WTC11 (cell line): ENCODE measurements at regions of chr17 and their contacts with region 1.

Region 1: GRCh38 chr17:8393420-8394241 is 4.0 kb downstream of the RNF222 start:
- DNase-seq: no peak
- ATAC-seq: no peak
- H3K4me3 Mint-ChIP-seq: no peak overlapping the region
- H3K27ac Mint-ChIP-seq: no peak overlapping the region
- H3K4me1 Mint-ChIP-seq: peaks cover 8% of the 10 kb centered on the region
- H3K27me3 Mint-ChIP-seq: peaks cover 13% of the 10 kb centered on the region
- CTCF ChIP-seq: no peak

Region 2: DNA sequence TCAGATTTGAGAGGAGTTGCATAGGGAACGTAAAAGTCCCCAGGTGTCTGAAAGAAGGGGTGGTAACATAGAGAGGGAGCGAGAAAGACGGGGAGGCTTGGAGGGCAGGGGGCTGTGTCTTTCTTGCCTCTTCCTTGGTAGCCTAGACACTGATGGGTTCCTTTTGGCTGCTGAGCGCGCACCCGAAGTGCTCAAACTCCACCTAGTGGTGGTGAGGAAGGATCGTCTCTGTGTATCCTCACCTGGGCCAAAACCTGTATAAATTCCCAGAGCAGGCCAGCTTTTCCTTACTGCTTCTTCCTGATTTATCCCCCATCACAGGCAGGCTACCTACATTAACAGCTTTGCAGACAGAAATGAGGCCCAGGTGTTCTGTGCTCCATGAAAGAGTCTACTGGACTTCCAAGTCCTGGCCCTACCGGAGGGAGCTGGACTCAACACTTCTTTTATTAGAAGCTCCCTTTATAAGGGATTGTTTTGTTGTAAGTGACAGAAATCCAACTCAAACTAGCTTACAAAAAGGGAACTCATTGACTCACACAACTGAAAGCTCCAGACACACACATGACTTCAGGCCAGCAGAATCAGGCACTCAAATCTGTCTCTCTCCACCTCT is 92.9 kb before region 1 on chr17:
- CTCF ChIA-PET with region 1: no interaction called
- POLR2A ChIA-PET with region 1: no interaction called
- DNase-seq: peak; percentile 57
- ATAC-seq: peak; percentile 98
- H3K4me3 Mint-ChIP-seq: peak overlapping the region; percentile 41
- H3K27ac Mint-ChIP-seq: no peak overlapping the region; the same call in 1 of the 2 replicates
- H3K4me1 Mint-ChIP-seq: peaks cover 6% of the 10 kb centered on the region; the same call in 1 of the 2 replicates
- H3K27me3 Mint-ChIP-seq: no peaks in the 10 kb centered on the region
- CTCF ChIP-seq: peak; percentile 80

Region 3: DNA sequence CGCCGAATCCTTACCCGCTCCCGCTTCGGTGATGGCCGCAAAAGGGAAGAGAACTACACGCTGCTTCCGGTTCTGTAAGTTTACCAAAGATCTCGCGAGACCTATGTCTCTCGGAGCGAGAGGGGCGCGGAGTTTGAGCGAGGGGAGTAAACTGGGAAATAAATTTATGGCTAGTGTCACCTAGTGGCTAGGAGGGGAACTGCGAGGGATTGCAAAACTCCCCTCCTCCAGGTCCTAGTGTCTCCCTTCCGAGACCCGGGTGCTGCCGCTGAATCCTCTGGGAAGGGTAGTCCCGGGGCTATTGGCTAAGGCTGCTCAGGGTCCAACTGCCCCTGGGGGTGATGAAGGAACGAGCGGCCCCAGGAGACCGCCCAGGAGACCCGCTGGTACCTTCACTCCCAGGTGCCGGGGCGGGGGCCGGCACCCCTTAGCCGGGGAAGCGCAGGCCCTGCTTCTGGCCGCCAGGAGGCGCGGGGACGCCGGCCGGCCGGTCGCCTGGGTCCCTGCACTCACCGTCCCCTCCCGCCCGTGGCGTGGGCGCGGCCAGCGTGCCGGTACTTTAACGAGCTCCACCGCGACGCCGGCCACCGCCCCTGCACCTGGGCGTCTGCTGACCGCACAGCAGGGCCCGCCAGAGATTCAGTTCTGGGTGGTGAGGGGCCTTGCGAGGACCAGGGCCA is 10.3 kb before region 1 on chr17 and contains the start of gene RPL26:
- CTCF ChIA-PET with region 1: interaction called, 20 read pairs
- POLR2A ChIA-PET with region 1: no interaction called
- DNase-seq: peak; percentile 97
- ATAC-seq: peak; percentile 91
- H3K4me3 Mint-ChIP-seq: peak within 1 kb of the TSS; percentile 98
- H3K27ac Mint-ChIP-seq: peak within 1 kb of the TSS; percentile 98
- H3K4me1 Mint-ChIP-seq: peaks cover 48% of the 10 kb centered on the region
- H3K27me3 Mint-ChIP-seq: no peaks in the 10 kb centered on the region
- CTCF ChIP-seq: peak; percentile 95
- total RNA-seq, gene RPL26: 1,825 to 2,081 TPM (median 2,046 TPM) in 3 replicates